Lower lobe of right lung (tissue), 2 donors: ENCODE measurements at regions of chr13 and their contacts with region 1.

Region 1: DNA sequence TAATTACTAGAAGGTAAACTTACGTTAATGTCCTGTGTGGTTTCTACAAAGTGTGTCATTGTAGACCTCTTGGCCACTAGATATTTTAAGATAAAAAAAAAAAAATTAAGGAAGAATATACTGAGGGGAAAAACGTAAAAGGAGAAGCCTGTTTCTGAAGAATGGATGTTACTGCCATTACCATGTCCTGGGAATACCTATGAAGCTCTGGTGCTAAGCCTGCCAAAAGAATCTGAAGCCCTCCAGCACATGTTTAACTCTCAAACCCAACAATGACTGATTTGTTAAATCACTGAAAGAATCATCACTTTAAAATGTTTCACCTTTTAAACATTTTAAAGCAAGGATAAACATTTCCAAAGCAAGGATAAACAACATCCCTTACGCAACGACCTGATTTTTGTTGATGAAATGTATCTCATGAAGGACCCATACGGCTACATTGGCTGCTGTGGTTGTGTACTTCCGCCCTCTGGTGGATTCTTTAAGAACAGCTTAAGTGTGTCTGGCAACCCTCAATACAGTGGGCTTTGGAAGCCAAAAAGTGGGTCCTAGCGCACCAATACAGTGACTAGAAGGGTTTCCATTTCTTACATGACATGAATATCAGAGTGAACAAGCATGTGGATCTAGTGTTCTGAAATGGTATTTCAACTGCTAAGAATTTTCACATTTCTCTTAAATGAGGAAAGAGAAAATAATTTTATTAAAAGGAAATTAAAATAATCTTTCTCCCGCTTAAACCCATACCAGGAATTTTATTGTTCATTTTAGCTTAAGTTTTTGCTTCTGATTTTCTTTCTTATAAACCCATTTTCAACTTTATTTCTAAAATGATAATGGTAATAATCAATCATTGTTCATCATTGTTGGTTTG is 74.5 kb upstream of the RAP2A start:
- DNase-seq: no peak
- ATAC-seq: peak; percentile 88 to 94
- H3K4me3 ChIP-seq: no peak overlapping the region
- H3K27ac ChIP-seq: no peak overlapping the region
- H3K4me1 ChIP-seq: no peaks in the 10 kb centered on the region
- H3K27me3 ChIP-seq: no peaks in the 10 kb centered on the region
- CTCF ChIP-seq: peak; percentile 87

Region 2: DNA sequence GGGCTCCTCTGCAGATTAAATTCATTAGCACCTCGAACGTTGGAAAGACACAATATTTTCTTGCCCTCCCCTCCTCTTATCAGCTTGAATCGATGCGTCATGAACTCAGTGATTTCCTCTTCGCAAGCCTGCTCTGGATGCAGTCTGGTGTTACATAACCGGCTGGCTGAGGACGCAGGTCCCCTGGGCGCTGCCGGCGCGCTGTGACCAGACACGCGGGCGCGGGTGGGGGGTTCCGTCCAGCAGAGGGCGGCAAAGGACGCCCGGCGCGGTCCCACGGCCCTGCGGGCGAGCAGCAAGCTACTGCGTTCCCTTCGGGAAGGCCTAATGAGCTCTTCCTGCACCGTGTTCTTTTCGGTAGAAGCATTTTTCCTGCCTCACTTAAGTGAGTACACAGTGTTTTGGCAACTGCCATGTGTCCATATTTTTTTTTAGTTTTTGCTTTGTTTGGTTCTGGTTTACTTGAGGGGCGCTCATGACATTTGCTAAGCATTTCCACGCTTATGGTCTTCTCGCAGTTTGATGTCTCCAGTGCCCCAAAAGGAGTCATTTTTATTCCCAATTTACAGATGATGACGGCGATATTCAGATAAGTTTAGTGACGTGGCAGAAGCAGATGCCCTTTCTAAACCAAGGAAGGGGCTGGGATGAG is 249.5 kb before region 1 on chr13:
- intact Hi-C with region 1: loop called (anchors 10 kb)
- DNase-seq: peak; percentile 92
- ATAC-seq: peak; percentile 97 to 99
- H3K4me3 ChIP-seq: peak overlapping the region; percentile 16
- H3K27ac ChIP-seq: peak overlapping the region; percentile 20
- H3K4me1 ChIP-seq: peaks cover 54% of the 10 kb centered on the region
- H3K27me3 ChIP-seq: no peaks in the 10 kb centered on the region
- CTCF ChIP-seq: peak; percentile 97

Region 3: DNA sequence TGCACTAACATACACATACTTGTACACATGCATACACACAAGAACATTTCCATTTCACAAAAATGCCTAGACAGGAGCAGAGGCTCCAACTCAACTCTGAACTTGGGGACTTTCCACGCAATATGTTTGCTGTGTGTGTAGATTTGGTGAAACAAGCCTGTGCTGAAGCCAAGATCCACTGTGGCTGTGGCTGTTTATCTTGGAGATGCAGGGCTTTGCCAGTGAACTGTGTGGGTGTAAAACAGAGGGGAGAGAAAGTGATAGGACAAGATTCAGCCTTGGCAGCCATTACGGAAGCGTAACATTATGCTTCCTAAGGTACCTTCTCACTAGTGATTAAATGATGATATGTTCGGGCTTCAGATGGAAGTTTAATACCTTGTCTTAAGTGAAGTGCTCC is 210.5 kb before region 1 on chr13:
- intact Hi-C with region 1: no loop called
- DNase-seq: no peak
- ATAC-seq: no peak
- H3K4me3 ChIP-seq: no peak overlapping the region
- H3K27ac ChIP-seq: no peak overlapping the region
- H3K4me1 ChIP-seq: no peaks in the 10 kb centered on the region
- H3K27me3 ChIP-seq: no peaks in the 10 kb centered on the region
- CTCF ChIP-seq: no peak

Region 4: DNA sequence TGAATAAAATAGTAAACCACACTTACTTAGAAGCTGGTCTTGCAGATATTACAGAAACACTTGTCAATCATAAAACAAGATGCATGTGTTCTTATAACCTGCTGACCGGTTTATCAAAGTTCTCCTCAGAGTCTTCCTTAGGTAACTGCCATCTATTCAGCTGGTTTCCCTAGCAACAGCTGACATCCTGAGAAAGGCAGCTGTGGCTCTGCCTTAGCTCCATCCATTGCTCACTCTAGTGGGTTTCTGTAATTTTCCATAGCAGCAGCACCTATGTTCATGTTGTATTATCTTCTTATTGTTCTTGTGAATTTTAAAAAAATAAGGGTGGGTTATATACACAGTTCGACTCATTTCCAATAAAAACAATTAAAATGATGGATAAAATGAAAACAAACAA is 162.3 kb after region 1 on chr13:
- intact Hi-C with region 1: no loop called
- DNase-seq: no peak
- ATAC-seq: no peak
- H3K4me3 ChIP-seq: no peak overlapping the region
- H3K27ac ChIP-seq: no peak overlapping the region
- H3K4me1 ChIP-seq: no peaks in the 10 kb centered on the region
- H3K27me3 ChIP-seq: no peaks in the 10 kb centered on the region
- CTCF ChIP-seq: no peak